BJ (cell line): ENCODE measurements at regions of chr17 and their contacts with region 1.

Region 1: GRCh38 chr17:19447085-19447583 is 36.1 kb downstream of the RNF112 start:
- DNase-seq: no peak
- H3K4me3 ChIP-seq: no peak overlapping the region
- H3K27me3 ChIP-seq: peaks cover under 1% of the 10 kb centered on the region; the same call in 1 of the 2 replicates
- CTCF ChIP-seq: peak; percentile 84

Region 2: DNA sequence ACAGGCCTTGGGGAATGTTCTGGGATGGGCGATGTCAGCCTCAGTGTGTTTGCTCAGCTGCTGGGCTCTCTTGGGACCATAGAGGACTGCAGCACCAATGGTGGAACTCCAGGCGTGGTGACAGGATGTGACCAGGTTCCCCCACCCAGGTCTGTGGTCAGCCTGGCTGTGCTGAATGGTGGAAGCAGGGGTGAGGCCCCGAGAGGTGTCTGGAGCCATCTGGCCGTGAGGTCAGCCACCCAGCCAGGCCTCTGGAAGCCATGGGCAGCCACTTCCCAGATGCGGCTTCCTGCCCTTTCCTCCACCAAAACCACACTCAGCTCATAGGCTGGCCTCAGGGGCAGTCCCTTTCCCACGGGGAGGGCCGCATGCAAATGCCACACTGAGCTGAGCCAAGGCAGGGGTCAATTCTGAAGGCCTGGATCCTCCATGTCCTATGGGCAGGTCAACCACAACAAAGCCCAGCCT is 76.6 kb before region 1 on chr17:
- CTCF ChIA-PET with region 1: interaction called, 178 read pairs
- POLR2A ChIA-PET with region 1: no interaction called
- DNase-seq: no peak
- H3K4me3 ChIP-seq: no peak overlapping the region
- H3K27me3 ChIP-seq: no peaks in the 10 kb centered on the region
- CTCF ChIP-seq: no peak

Region 3: GRCh38 chr17:19377602-19378392 is 69.3 kb before region 1 on chr17:
- CTCF ChIA-PET with region 1: interaction called, 37 read pairs
- POLR2A ChIA-PET with region 1: interaction called, 5 read pairs
- DNase-seq: peak; percentile 96
- H3K4me3 ChIP-seq: peak overlapping the region; percentile 85
- H3K27me3 ChIP-seq: no peaks in the 10 kb centered on the region
- CTCF ChIP-seq: no peak

Region 4: GRCh38 chr17:19386974-19387920 is 59.9 kb before region 1 on chr17 and contains the start of gene MFAP4:
- CTCF ChIA-PET with region 1: interaction called, 78 read pairs
- POLR2A ChIA-PET with region 1: no interaction called
- DNase-seq: peak; percentile 68
- H3K4me3 ChIP-seq: peak within 1 kb of the TSS; percentile 53
- H3K27me3 ChIP-seq: no peaks in the 10 kb centered on the region
- CTCF ChIP-seq: no peak
- polyA plus RNA-seq, gene MFAP4: 62.1 and 86.8 TPM in 2 replicates

Region 5: GRCh38 chr17:19433727-19434340 is 13.3 kb before region 1 on chr17:
- CTCF ChIA-PET with region 1: interaction called, 50 read pairs
- POLR2A ChIA-PET with region 1: no interaction called
- DNase-seq: no peak
- H3K4me3 ChIP-seq: no peak overlapping the region
- H3K27me3 ChIP-seq: no peaks in the 10 kb centered on the region
- CTCF ChIP-seq: no peak

Region 6: GRCh38 chr17:19492141-19492540 is 45.0 kb after region 1 on chr17:
- CTCF ChIA-PET with region 1: interaction called, 10 read pairs
- POLR2A ChIA-PET with region 1: no interaction called
- DNase-seq: no peak
- H3K4me3 ChIP-seq: no peak overlapping the region
- H3K27me3 ChIP-seq: peaks cover 2% of the 10 kb centered on the region; the same call in 1 of the 2 replicates
- CTCF ChIP-seq: no peak

Region 7: DNA sequence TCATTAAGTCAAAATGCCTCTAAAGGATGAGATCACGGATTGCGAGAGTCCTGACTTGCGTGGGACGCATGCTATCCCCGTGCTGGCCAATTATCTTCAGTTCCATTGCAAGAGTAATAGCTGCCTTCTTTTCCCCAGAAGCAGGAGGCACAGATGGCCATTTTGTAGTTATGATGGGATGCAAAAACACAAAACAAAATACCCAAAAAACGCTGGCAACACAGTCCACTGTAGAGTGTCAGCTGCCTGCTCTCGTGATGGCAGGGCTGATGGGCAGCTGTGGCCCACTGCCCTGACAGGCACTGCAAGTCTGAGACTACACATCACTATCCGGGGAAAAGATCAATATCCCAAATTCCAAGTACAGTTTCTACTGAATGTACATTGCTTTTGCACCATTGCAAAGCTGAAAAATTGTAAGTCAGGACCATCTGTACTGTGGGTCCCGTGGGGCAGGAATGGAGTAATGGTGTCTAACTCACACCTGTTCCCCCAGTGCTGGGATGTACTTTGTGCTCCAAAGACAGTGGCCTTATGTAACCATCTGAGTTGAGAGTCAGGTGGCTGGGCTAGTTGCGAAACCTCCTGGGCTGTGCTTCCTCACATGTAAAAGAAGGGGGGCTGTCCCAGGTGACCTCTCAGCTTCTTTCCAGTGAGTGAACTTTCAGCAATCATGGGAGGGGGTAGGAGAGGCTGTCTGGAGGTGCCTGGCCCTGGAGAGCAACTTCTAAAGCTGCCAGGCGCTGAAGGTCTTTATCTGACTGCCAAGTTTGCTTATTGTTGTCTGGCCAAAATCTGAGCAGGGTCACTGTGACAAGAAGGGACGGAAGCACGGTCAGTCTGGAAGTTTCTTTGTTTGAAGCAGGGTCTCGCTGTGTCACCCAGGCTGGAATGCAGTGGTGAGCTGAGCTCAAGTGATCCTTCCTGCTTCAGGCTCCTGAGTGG is 91.2 kb after region 1 on chr17:
- CTCF ChIA-PET with region 1: no interaction called
- POLR2A ChIA-PET with region 1: no interaction called
- DNase-seq: no peak
- H3K4me3 ChIP-seq: no peak overlapping the region
- H3K27me3 ChIP-seq: peaks cover 8% of the 10 kb centered on the region
- CTCF ChIP-seq: no peak

Region 8: DNA sequence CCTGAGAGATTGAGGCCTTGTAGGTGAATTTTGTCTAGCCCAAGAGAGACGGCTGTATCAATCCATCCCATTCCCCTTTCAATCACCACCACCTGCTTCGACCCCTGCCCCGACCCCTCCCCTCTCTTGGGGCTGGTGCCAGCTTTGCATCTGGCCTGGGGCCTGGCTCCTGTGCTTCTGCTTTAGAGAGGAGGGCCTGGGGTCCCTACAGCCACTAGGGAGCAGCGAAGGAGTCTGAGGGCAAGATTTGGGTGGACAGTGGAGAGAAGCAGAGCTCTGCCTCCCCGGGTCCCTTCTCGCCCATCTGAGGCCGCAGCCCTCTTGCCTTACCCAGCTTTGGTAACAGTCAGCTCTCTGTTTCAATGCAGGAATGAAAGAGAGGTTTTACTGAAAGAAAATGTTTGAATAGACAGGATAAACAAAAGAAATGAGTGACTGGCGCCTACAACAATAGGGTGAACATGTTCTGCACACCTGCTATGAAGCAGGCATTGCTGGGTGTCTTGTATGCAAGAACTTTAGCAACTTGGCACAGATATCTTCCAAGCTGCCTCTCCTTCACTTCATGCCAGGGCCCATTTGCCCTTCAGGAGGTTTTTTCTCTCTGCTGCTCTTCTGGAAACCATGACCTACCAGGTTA is 143.9 kb after region 1 on chr17:
- CTCF ChIA-PET with region 1: no interaction called
- POLR2A ChIA-PET with region 1: no interaction called
- DNase-seq: no peak
- H3K4me3 ChIP-seq: no peak overlapping the region
- H3K27me3 ChIP-seq: no peaks in the 10 kb centered on the region; the same call in 1 of the 2 replicates
- CTCF ChIP-seq: no peak